Heart left ventricle (tissue), 16 donors: ENCODE measurements at regions of chr2 and their contacts with region 1.

Region 1: DNA sequence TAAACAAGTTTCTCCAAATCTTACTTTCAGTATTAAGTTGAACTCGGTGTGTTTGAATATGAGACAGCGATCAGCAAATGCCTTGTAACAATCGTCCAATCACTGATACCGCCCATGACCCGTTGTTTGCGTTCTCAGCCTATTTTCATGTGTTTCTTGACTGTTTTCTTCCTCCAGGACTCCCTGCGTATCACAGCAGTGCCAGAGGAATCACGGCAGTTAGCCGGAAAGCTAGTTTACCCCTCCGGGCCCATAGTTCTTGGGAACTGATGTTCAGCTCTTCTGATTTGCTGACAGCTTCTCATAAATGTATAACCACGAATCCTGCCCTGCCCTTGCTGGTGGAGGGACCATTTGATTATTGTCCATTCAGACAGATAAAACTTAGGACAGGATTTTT is 42.2 kb upstream of the TPO start:
- DNase-seq: no peak
- ATAC-seq: no peak
- H3K4me3 ChIP-seq: no peak overlapping the region
- H3K27ac ChIP-seq: no peak overlapping the region
- H3K4me1 ChIP-seq: peaks cover 0 to 3% (median 0%) of the 10 kb centered on the region in 12 donors
- H3K27me3 ChIP-seq: peaks cover 0 to 8% (median 0%) of the 10 kb centered on the region in 9 donors
- CTCF ChIP-seq: no peak
- POLR2A ChIP-seq: no peak

Region 2: DNA sequence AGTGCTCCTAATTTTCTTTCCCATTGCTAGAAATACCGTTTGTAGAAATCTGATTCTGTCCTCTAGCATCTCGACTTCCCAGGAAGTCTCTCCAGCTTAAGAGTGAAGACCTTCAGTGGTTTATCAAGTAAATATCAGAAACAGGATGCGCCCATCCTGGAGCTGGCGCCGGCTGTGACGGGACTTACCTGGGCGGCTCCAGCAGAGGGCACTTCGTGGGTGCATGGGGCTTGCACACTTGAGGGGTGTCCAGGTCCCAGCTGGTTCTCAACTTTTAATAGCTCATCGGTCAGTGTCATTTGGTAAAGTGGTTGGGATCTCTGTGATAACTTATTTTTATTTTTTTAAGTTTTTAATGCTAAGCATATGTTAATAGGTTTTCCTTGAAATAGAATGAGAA is 124.8 kb before region 1 on chr2:
- intact Hi-C with region 1: loop called in 1 of 10 experiments (anchors 10 kb)
- DNase-seq: no peak
- ATAC-seq: no peak
- H3K4me3 ChIP-seq: no peak overlapping the region
- H3K27ac ChIP-seq: peak overlapping the region in 1 of 12 donors; percentile 63
- H3K4me1 ChIP-seq: no peaks in the 10 kb centered on the region
- H3K27me3 ChIP-seq: peaks cover 0 to 11% (median 0%) of the 10 kb centered on the region in 9 donors
- CTCF ChIP-seq: no peak
- POLR2A ChIP-seq: no peak

Region 3: GRCh38 chr2:1268034-1268433 is 103.0 kb before region 1 on chr2:
- intact Hi-C with region 1: no loop called
- DNase-seq: no peak
- ATAC-seq: no peak
- H3K4me3 ChIP-seq: no peak overlapping the region
- H3K27ac ChIP-seq: no peak overlapping the region
- H3K4me1 ChIP-seq: no peaks in the 10 kb centered on the region
- H3K27me3 ChIP-seq: peaks cover 0 to 4% (median 0%) of the 10 kb centered on the region in 9 donors
- CTCF ChIP-seq: no peak
- POLR2A ChIP-seq: no peak

Region 4: DNA sequence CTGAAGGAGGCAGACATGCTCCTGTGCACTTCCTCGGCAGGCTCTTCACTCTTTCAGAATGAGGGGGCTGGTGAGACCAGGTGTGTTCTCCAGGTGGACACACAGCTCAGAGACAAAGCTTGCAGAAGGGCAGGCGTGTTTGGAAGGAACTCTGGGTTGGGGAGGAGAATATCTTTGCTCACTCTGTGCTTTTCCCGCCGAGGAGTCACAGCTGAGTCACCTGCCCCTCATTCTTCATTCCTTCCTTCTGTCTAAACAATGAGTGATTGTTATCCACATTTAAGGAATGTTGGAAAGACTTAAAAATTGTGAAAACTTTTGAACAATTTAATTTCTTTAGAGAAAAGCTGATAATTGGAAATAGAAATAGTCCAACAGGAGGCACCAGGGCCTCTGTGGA is 84.2 kb before region 1 on chr2:
- intact Hi-C with region 1: loop called in 1 of 10 experiments (anchors 5 kb)
- DNase-seq: no peak
- ATAC-seq: no peak
- H3K4me3 ChIP-seq: no peak overlapping the region
- H3K27ac ChIP-seq: no peak overlapping the region
- H3K4me1 ChIP-seq: peaks cover 0 to 11% (median 1%) of the 10 kb centered on the region in 12 donors
- H3K27me3 ChIP-seq: peaks cover 0 to 8% (median 0%) of the 10 kb centered on the region in 9 donors
- CTCF ChIP-seq: no peak
- POLR2A ChIP-seq: no peak

Region 5: GRCh38 chr2:1339388-1340140 is 31.5 kb before region 1 on chr2:
- intact Hi-C with region 1: loop called in 1 of 10 experiments (anchors 5 kb)
- DNase-seq: no peak
- ATAC-seq: no peak
- H3K4me3 ChIP-seq: no peak overlapping the region
- H3K27ac ChIP-seq: no peak overlapping the region
- H3K4me1 ChIP-seq: no peaks in the 10 kb centered on the region
- H3K27me3 ChIP-seq: peaks cover 0 to 7% (median 0%) of the 10 kb centered on the region in 9 donors
- CTCF ChIP-seq: no peak
- POLR2A ChIP-seq: no peak